Right cardiac atrium (tissue), 5 donors: ENCODE measurements at regions of chr3 and their contacts with region 1.

Region 1: DNA sequence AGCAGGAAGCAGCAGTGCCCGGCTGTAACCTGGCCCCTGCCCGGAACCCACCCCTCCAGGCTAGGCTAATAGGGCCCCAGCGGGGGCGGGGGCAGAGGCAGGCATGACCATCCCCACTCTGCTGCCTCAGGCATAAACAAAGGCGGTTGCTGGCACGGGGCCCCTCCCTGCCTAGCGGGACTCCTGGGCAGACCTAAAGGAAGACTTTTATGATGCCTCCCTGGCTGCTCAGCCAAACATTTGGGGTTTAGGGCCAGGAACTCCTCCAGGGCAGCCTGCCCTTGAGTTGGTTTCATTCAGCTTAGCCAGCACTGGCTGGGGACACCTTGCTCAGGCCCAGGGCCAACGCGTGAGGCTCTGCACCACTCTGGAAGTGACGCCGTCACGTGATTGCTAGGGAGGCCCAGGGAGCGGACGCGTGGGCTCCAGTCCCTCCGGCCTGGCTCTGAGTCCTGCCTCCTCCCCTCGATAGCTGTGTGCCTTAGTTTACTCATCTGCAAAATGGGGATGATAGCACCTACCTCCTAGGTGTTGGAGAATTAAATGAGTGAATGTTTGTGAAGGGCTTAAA is 27.7 kb downstream of the HDAC11 start:
- DNase-seq: peak; percentile 54 to 77 (median 71)
- ATAC-seq: peak; percentile 56 to 59
- H3K4me3 ChIP-seq: no peak overlapping the region
- H3K27ac ChIP-seq: no peak overlapping the region
- H3K4me1 ChIP-seq: no peaks in the 10 kb centered on the region
- H3K27me3 ChIP-seq: no peaks in the 10 kb centered on the region

Region 2: GRCh38 chr3:13262493-13263211 is 245.2 kb before region 1 on chr3:
- intact Hi-C with region 1: no loop called
- DNase-seq: peak in 1 of 3 donors; percentile 4
- ATAC-seq: peak in 1 of 2 donors; percentile 39
- H3K4me3 ChIP-seq: no peak overlapping the region
- H3K27ac ChIP-seq: no peak overlapping the region
- H3K4me1 ChIP-seq: no peaks in the 10 kb centered on the region
- H3K27me3 ChIP-seq: no peaks in the 10 kb centered on the region

Region 3: GRCh38 chr3:13549623-13550422 is 42.0 kb after region 1 on chr3:
- intact Hi-C with region 1: loop called in 1 of 4 experiments (anchors 5 kb)
- DNase-seq: peak in 1 of 3 donors; percentile 79
- ATAC-seq: peak in 1 of 2 donors; percentile 1
- H3K4me3 ChIP-seq: peak overlapping the region; percentile 57
- H3K27ac ChIP-seq: peak overlapping the region; percentile 21
- H3K4me1 ChIP-seq: peaks cover 7% of the 10 kb centered on the region
- H3K27me3 ChIP-seq: no peaks in the 10 kb centered on the region

Region 4: GRCh38 chr3:13564751-13565560 is 57.1 kb after region 1 on chr3:
- intact Hi-C with region 1: no loop called
- DNase-seq: peak in 1 of 3 donors; percentile 76
- ATAC-seq: peak; percentile 52 to 65
- H3K4me3 ChIP-seq: no peak overlapping the region
- H3K27ac ChIP-seq: peak overlapping the region; percentile 22
- H3K4me1 ChIP-seq: peaks cover 18% of the 10 kb centered on the region
- H3K27me3 ChIP-seq: no peaks in the 10 kb centered on the region

Region 5: GRCh38 chr3:13623099-13623654 is 115.3 kb after region 1 on chr3:
- intact Hi-C with region 1: loop called in 1 of 4 experiments (anchors 5 kb)
- DNase-seq: peak in 2 of 3 donors; percentile 62 to 65
- ATAC-seq: peak; percentile 28 to 39
- H3K4me3 ChIP-seq: no peak overlapping the region
- H3K27ac ChIP-seq: no peak overlapping the region
- H3K4me1 ChIP-seq: no peaks in the 10 kb centered on the region
- H3K27me3 ChIP-seq: no peaks in the 10 kb centered on the region

Region 6: DNA sequence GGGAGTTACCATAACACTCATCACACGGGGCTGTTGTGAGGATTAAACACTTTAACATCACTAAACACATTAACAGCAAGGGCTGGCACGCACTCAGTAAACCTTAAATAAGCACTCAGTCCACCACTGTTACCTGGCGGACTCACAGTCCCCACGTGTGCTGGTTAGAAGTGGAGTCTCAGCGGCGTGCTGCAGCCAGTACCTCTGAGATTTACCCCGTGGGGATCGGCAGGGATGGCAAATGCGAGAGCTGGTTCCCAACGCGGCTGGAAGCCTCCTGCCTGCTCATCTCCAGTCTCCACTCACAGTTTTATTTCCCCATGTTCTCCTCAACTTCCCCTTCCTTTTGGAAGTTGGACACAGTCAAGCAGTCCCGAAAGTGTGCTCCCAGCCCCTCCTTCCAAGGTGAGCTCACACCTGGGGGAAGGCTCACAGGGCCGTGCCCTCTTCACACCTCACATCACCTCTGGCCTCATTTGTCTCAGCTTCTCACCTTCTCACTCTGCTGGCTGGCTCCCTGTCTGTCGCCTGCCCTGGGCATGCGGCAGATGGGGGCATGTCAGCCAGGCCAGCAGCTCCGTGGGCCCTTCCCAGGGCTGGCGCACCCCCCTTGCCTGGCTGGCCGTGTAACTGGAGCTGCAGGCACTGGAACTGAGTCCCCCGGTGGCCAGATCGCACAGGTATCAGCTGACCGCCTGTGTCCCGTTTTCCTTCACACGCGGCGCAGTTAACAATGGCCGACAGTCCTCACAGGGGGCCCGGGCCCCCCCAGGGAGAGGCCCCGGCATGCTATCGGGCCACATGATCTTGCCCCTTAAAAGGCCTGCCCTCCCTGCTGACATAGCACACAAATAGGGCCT is 284.9 kb after region 1 on chr3:
- intact Hi-C with region 1: no loop called
- DNase-seq: no peak
- ATAC-seq: no peak
- H3K4me3 ChIP-seq: no peak overlapping the region
- H3K27ac ChIP-seq: no peak overlapping the region
- H3K4me1 ChIP-seq: no peaks in the 10 kb centered on the region
- H3K27me3 ChIP-seq: no peaks in the 10 kb centered on the region